ENCODE measurements at regions of chr11 and their contacts with region 1.

Region 1: DNA sequence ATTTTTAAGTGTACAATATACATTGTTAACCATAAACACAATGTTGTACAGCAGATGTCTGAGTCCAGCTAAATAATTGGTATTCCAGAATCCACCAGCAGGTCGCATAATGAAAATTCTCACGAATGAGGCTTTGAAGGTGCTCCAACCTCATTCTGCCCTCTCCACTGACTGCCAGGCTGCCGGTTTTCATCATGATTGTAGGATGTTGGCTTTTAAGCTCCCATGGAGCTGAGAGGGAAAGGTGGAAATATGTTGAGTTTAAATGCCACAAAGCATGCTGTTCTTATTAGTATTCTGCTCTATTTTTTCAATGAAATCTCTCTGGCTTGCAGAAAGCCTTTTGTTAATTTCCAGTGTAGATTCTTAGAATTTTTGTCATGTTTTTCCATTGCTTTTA is 337.2 kb upstream of the DDI1 start:
- DNase-seq: peak; percentile 36
- H3K4me3 ChIP-seq: no peak overlapping the region
- H3K27ac ChIP-seq: 0 out of 2 replicates have a peak overlapping the region, but pooled peaks have one; percentile 0
- H3K4me1 ChIP-seq: peaks cover 41% of the 10 kb centered on the region
- H3K27me3 ChIP-seq: no peaks in the 10 kb centered on the region

Region 2: GRCh38 chr11:103234974-103235373 is 464.2 kb before region 1 on chr11:
- in situ Hi-C with region 1: no loop called
- DNase-seq: peak; percentile 83
- H3K4me3 ChIP-seq: 0 out of 2 replicates have a peak overlapping the region, but pooled peaks have one; percentile 29
- H3K27ac ChIP-seq: peak overlapping the region; percentile 46
- H3K4me1 ChIP-seq: peaks cover 13% of the 10 kb centered on the region
- H3K27me3 ChIP-seq: no peaks in the 10 kb centered on the region

Region 3: DNA sequence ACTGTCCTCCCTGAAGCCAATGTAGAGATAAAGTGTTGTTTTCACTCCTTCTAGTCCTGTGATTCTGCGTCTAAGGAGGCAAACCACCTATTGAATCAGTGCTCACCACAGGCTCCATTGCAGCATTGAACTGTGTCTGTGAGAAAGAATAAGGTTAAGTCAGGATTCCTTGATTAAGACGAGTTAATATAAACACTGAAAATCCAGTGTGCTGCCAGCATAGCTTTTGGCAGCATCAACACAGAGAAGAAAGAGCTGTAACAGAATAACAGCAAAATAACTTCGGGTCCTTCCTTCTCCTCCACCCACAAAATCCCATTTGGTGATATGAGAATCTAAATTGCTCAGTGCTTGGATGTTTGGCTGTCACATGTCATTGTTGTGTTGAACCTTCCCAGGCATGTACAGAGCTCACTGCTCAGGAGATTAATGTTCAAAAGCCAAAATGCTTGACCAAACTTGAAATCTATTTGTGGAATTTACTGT is 152.0 kb after region 1 on chr11:
- in situ Hi-C with region 1: no loop called
- DNase-seq: peak; percentile 36
- H3K4me3 ChIP-seq: no peak overlapping the region
- H3K27ac ChIP-seq: 0 out of 2 replicates have a peak overlapping the region, but pooled peaks have one; percentile 4
- H3K4me1 ChIP-seq: peaks cover 16% of the 10 kb centered on the region; the same call in 1 of the 2 replicates
- H3K27me3 ChIP-seq: no peaks in the 10 kb centered on the region

Region 4: GRCh38 chr11:104148074-104148473 is 448.9 kb after region 1 on chr11:
- in situ Hi-C with region 1: loop called (anchors 10 kb)
- DNase-seq: peak; percentile 74
- H3K4me3 ChIP-seq: no peak overlapping the region
- H3K27ac ChIP-seq: no peak overlapping the region
- H3K4me1 ChIP-seq: peaks cover 14% of the 10 kb centered on the region
- H3K27me3 ChIP-seq: no peaks in the 10 kb centered on the region